ENCODE measurements at regions of chr20 and their contacts with region 1.

Region 1: DNA sequence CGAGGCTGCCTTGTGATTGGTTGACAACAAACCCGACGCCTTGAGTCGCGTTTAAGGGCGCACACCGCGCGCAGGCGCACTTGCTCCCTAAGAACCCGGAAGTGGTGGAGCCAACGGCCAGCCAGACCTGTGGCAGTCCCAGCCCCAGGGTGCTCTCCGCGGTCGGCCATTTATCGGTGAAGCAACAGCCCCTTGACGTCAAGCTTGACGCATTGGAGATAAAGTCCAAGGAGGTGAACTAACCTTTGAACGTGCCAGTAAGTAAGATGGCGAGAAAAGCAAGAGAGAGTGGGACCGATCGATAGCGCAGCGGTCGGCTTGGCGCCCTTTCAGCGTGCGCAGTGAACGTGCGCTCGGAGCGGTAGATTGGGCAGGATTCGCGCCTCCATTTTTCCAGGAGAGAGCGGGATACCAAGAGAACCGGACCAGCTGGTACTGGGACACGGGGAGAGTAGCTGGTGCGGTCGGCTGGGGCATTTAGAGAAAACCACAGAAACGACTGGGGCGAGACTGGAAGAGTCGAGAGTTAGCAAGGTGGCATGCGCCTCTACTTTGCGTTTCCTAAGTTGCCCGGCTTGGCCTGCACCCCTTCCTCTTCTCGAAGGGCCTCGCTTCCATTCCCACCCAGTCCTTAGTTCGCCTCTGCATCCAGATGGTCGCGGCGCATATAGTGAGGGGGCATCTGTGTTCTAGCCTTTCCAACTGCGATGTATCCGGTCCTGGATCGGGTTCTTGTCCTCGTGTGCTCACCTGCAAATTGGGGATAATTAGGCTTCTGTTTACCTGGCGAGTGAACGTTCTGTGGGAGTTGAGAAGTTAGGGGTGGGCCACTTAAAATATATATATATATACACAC is at the start of gene CSTF1:
- DNase-seq: peak; percentile 99 to 100
- ATAC-seq: peak; percentile 98 to 99 (median 98)
- H3K4me3 ChIP-seq: peak within 1 kb of the TSS; percentile 90
- H3K27ac ChIP-seq: peak within 1 kb of the TSS; percentile 90
- H3K4me1 ChIP-seq: peaks cover 26% of the 10 kb centered on the region
- H3K27me3 ChIP-seq: no peaks in the 10 kb centered on the region
- CTCF ChIP-seq: no peak
- total RNA-seq, gene CSTF1: 15.5 to 20.3 (median 16.7) TPM

Region 2: DNA sequence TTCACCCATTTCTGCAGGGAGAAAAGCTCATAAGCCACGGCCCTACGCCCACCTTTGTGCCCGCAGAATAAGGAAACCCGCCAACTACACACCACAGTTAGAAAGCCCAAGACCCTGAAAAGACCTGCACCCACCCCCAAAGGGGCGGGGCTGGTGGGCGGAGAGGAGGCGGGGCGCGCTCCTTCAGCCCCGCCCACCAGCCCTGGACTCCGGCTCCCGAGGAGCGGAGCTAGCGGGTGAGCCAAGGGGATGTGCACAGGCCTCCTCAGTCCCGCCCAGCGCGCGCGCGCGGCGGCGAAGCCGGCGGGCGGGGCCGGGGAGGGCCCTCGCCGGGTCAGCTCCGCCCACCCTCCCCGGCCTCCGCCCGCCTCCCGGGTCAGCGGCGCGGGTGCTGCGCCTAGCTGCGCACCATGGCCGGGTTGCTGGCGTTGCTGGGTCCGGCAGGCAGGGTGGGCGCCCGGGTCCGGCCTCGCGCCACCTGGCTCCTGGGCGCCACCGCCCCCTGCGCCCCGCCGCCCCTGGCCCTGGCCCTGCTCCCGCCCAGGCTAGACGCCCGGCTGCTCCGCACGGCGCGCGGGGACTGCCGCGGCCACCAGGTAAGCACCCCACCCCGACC is 33.8 kb before region 1 on chr20 and contains the start of gene FAM210B:
- intact Hi-C with region 1: loop called in 1 of 2 experiments (anchors 5 kb)
- DNase-seq: peak; percentile 91 to 95
- ATAC-seq: peak; percentile 96 to 99 (median 98)
- H3K4me3 ChIP-seq: peak within 1 kb of the TSS; percentile 86
- H3K27ac ChIP-seq: peak within 1 kb of the TSS; percentile 91
- H3K4me1 ChIP-seq: peaks cover 23% of the 10 kb centered on the region
- H3K27me3 ChIP-seq: no peaks in the 10 kb centered on the region
- CTCF ChIP-seq: no peak
- total RNA-seq, gene FAM210B: 35.6 to 64.6 (median 53.2) TPM

Region 3: GRCh38 chr20:56468316-56469082 is 76.0 kb after region 1 on chr20 and contains the start of gene RTF2:
- intact Hi-C with region 1: loop called (anchors 2 kb)
- DNase-seq: peak; percentile 95 to 97
- ATAC-seq: peak; percentile 100
- H3K4me3 ChIP-seq: peak within 1 kb of the TSS; percentile 71
- H3K27ac ChIP-seq: peak within 1 kb of the TSS; percentile 82
- H3K4me1 ChIP-seq: peaks cover 14% of the 10 kb centered on the region
- H3K27me3 ChIP-seq: no peaks in the 10 kb centered on the region
- CTCF ChIP-seq: no peak
- total RNA-seq, gene RTF2: 89.0 to 93.0 (median 90.5) TPM

Region 4: GRCh38 chr20:56595746-56596478 is 203.4 kb after region 1 on chr20:
- intact Hi-C with region 1: no loop called
- DNase-seq: no peak
- ATAC-seq: no peak
- H3K4me3 ChIP-seq: no peak overlapping the region
- H3K27ac ChIP-seq: no peak overlapping the region
- H3K4me1 ChIP-seq: no peaks in the 10 kb centered on the region
- H3K27me3 ChIP-seq: peaks cover 0 to 2% (median 0%) of the 10 kb centered on the region in 3 donors
- CTCF ChIP-seq: no peak

Region 5: GRCh38 chr20:56925082-56925830 is 532.7 kb after region 1 on chr20:
- intact Hi-C with region 1: no loop called
- DNase-seq: no peak
- ATAC-seq: no peak
- H3K4me3 ChIP-seq: peak overlapping the region; percentile 22
- H3K27ac ChIP-seq: no peak overlapping the region
- H3K4me1 ChIP-seq: no peaks in the 10 kb centered on the region
- H3K27me3 ChIP-seq: peaks cover 10 to 67% (median 15%) of the 10 kb centered on the region in 3 donors
- CTCF ChIP-seq: no peak